WTC11 (cell line): ENCODE measurements at regions of chr2 and their contacts with region 1.

Region 1: GRCh38 chr2:229273723-229274338 is 2.7 kb upstream of the PID1 start:
- DNase-seq: peak; percentile 59
- ATAC-seq: peak; percentile 86
- H3K4me3 Mint-ChIP-seq: peak overlapping the region; percentile 43
- H3K27ac Mint-ChIP-seq: no peak overlapping the region
- H3K4me1 Mint-ChIP-seq: peaks cover 26% of the 10 kb centered on the region
- H3K27me3 Mint-ChIP-seq: peaks cover 38% of the 10 kb centered on the region
- CTCF ChIP-seq: peak; percentile 40; the same call in 1 of the 2 replicates

Region 2: DNA sequence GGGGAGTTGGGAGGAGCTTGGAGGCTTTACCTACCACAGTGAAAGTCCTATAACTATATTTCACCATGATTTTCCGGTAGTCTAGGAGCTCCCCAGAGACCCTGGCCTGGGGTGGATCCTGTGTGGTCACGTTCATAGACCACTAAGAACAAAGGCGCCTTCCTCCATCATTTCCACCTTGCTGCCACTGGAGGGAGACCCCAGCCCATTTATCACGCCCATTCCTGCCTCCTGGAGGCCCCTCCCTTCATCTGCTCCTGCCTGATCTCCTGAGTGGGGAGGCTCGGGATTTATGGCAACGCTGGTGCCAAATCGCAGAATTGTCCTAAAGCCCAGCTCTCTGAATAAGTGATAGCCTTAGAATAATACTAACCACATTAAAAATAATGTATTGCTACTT is 584.8 kb before region 1 on chr2:
- CTCF ChIA-PET with region 1: interaction called, 11 read pairs
- POLR2A ChIA-PET with region 1: no interaction called
- DNase-seq: peak; percentile 73
- ATAC-seq: peak; percentile 93
- H3K4me3 Mint-ChIP-seq: no peak overlapping the region
- H3K27ac Mint-ChIP-seq: no peak overlapping the region
- H3K4me1 Mint-ChIP-seq: peaks cover 23% of the 10 kb centered on the region
- H3K27me3 Mint-ChIP-seq: peaks cover 3% of the 10 kb centered on the region; the same call in 1 of the 2 replicates
- CTCF ChIP-seq: peak; percentile 63

Region 3: DNA sequence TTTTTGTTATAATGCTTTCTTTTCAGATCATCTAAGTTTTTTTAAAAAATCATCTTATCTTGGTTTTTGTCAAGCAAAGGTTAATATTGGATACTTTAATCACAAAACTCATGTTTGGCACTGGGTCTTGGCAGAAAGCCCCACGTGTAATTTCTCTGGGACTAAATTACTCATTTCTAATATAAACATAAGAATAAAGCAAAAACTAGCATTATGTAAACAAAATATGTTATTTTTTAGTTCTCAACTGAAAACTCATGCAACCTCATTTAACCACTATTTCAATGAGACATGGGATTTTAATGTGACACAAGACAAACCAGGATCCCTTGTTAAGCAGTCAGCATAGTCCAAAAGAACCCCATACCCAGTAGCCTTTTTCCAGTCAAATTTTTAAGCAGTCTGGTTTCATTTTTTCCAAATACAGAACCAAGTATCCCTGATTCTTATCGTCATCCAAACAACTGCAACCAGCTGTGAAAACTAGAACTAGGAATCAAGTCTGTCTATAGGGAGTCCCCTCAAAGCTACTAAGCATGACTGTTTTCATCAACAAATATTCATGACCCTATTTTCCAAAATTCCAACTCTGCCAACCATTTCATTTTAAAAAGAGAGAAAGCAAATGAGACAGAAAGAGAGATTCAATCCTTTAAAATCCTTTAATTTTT is 29.8 kb before region 1 on chr2:
- CTCF ChIA-PET with region 1: no interaction called
- POLR2A ChIA-PET with region 1: no interaction called
- DNase-seq: no peak
- ATAC-seq: no peak
- H3K4me3 Mint-ChIP-seq: no peak overlapping the region
- H3K27ac Mint-ChIP-seq: no peak overlapping the region
- H3K4me1 Mint-ChIP-seq: peaks cover 26% of the 10 kb centered on the region
- H3K27me3 Mint-ChIP-seq: peaks cover 4% of the 10 kb centered on the region; the same call in 1 of the 2 replicates
- CTCF ChIP-seq: no peak